Transverse colon (tissue), 4 donors: ENCODE measurements at regions of chr7 and their contacts with region 1.

Region 1: GRCh38 chr7:85074-85882 is 107.1 kb upstream of the FAM20C start:
- DNase-seq: no peak
- H3K4me3 ChIP-seq: no peak overlapping the region
- H3K27ac ChIP-seq: no peak overlapping the region
- H3K4me1 ChIP-seq: peaks cover 15 to 27% (median 22%) of the 10 kb centered on the region in 4 donors
- H3K27me3 ChIP-seq: no peaks in the 10 kb centered on the region
- CTCF ChIP-seq: no peak
- EP300 ChIP-seq: no peak
- POLR2A ChIP-seq: no peak

Region 2: GRCh38 chr7:41917-42565 is 43.2 kb before region 1 on chr7:
- in situ Hi-C with region 1: no loop called
- intact Hi-C with region 1: no loop called
- DNase-seq: no peak
- H3K4me3 ChIP-seq: no peak overlapping the region
- H3K27ac ChIP-seq: no peak overlapping the region
- H3K4me1 ChIP-seq: no peaks in the 10 kb centered on the region
- H3K27me3 ChIP-seq: no peaks in the 10 kb centered on the region
- CTCF ChIP-seq: no peak
- EP300 ChIP-seq: no peak
- POLR2A ChIP-seq: no peak

Region 3: GRCh38 chr7:64098-64915 is 21.0 kb before region 1 on chr7:
- in situ Hi-C with region 1: no loop called
- intact Hi-C with region 1: no loop called
- DNase-seq: peak; percentile 53
- H3K4me3 ChIP-seq: no peak overlapping the region
- H3K27ac ChIP-seq: no peak overlapping the region
- H3K4me1 ChIP-seq: peaks cover 0 to 14% (median 0%) of the 10 kb centered on the region in 4 donors
- H3K27me3 ChIP-seq: no peaks in the 10 kb centered on the region
- CTCF ChIP-seq: peak; percentile 29 to 55 (median 37)
- EP300 ChIP-seq: no peak
- POLR2A ChIP-seq: no peak

Region 4: DNA sequence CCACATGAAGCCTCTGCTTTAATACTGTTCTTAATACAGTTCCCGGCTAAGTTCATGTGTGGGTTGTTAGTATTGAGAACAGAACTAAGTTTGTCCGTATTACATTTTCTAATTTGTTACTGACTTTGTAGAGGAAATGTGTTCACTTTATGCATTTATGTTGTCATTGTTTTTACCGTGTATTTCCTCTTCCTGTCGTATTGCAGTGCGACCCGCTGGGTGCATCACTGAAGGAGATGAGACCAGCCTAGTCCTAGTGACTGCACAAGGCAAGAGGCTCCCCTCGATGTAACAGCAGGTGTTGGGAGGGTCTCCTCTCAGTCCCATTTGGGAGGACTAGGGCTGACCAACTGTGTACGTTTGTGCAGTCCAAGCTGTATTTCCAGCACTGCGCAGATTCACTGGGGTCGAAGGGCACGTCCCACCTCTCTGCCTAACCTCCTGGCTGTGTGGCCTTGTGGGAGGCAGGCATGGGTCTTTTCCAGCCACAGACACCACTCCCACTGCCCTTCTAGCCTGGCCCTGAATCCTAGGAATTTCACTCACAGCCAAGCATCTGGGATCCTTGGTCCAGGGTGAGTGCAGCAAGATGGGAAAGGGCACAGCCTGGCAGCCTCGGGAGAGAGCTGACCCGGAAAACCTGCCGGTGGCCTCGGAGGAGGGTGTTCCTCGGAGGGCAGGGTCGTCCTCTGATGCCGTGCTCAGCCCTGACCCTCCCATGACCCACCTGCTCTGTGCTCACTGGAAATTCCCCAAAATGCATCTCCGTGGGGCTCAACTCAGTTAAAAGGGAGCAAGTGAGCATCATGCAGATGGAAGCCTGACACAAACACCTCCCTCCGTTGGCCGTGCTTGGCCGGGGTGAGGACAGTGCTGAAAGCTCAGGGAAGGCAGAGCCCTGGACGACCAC is 43.1 kb after region 1 on chr7:
- in situ Hi-C with region 1: no loop called
- intact Hi-C with region 1: loop called (anchors 1 kb)
- DNase-seq: no peak
- H3K4me3 ChIP-seq: no peak overlapping the region
- H3K27ac ChIP-seq: no peak overlapping the region
- H3K4me1 ChIP-seq: peaks cover 0 to 20% (median 2%) of the 10 kb centered on the region in 4 donors
- H3K27me3 ChIP-seq: no peaks in the 10 kb centered on the region
- CTCF ChIP-seq: no peak
- EP300 ChIP-seq: no peak
- POLR2A ChIP-seq: no peak

Region 5: GRCh38 chr7:332646-333392 is 247.5 kb after region 1 on chr7:
- in situ Hi-C with region 1: no loop called
- intact Hi-C with region 1: no loop called
- DNase-seq: peak; percentile 90
- H3K4me3 ChIP-seq: peak overlapping the region; percentile 17 to 51 (median 30)
- H3K27ac ChIP-seq: peak overlapping the region; percentile 67 to 76 (median 72)
- H3K4me1 ChIP-seq: peaks cover 28 to 52% (median 42%) of the 10 kb centered on the region in 4 donors
- H3K27me3 ChIP-seq: no peaks in the 10 kb centered on the region
- CTCF ChIP-seq: peak; percentile 88 to 95 (median 90)
- EP300 ChIP-seq: peak; percentile 4
- POLR2A ChIP-seq: peak; percentile 13

Region 6: GRCh38 chr7:636396-636795 is 551.1 kb after region 1 on chr7:
- in situ Hi-C with region 1: no loop called
- intact Hi-C with region 1: no loop called
- DNase-seq: no peak
- H3K4me3 ChIP-seq: no peak overlapping the region
- H3K27ac ChIP-seq: no peak overlapping the region
- H3K4me1 ChIP-seq: no peaks in the 10 kb centered on the region
- H3K27me3 ChIP-seq: no peaks in the 10 kb centered on the region
- CTCF ChIP-seq: peak in 1 of 5 experiments; percentile 22
- EP300 ChIP-seq: no peak
- POLR2A ChIP-seq: no peak